ENCODE measurements at regions of chr11 and their contacts with region 1.

Region 1: GRCh38 chr11:123020968-123021367 is 39.3 kb upstream of the BSX start:
- DNase-seq: peak; percentile 20
- H3K4me3 ChIP-seq: no peak overlapping the region
- H3K27ac ChIP-seq: no peak overlapping the region
- H3K4me1 ChIP-seq: no peaks in the 10 kb centered on the region
- H3K27me3 ChIP-seq: no peaks in the 10 kb centered on the region
- CTCF ChIP-seq: peak; percentile 60 to 76

Region 2: DNA sequence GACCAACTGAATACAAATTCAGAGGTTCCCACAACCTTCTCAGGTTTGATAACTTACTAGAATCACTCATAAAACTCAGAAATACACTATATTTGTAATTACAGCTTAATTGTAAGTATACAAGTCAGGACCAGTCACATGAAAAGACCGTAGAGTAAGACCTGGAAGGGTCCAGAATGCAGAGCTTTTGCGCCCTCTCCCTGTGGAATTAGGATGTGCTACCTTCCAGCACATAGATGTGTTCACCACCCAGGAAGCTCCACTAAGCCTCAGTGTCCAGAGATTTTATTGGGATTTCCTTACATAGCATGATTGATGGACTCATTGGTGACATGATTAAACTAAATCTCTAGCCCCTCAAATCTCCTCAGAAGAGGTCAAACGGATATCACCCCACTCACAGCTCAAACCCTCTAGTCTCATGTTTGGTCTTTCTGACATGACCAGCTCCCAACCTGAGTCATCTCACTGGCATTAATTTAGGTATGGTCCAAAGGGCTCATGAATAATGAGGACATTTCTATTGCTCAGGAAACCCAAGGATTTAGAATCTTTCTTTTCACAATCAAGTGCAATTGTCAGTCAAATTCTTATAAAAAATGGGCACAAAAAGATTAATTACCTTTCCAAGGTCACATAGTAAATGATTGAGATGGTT is 442.7 kb before region 1 on chr11:
- CTCF ChIA-PET with region 1: interaction called, 12 read pairs
- dilution Hi-C with region 1: no loop called
- in situ Hi-C with region 1: loop called in 1 of 2 experiments (anchors 10 kb)
- intact Hi-C with region 1: loop called (anchors 1 kb)
- DNase-seq: no peak
- H3K4me3 ChIP-seq: no peak overlapping the region
- H3K27ac ChIP-seq: no peak overlapping the region
- H3K4me1 ChIP-seq: peaks cover 10% of the 10 kb centered on the region
- H3K27me3 ChIP-seq: no peaks in the 10 kb centered on the region
- CTCF ChIP-seq: no peak

Region 3: DNA sequence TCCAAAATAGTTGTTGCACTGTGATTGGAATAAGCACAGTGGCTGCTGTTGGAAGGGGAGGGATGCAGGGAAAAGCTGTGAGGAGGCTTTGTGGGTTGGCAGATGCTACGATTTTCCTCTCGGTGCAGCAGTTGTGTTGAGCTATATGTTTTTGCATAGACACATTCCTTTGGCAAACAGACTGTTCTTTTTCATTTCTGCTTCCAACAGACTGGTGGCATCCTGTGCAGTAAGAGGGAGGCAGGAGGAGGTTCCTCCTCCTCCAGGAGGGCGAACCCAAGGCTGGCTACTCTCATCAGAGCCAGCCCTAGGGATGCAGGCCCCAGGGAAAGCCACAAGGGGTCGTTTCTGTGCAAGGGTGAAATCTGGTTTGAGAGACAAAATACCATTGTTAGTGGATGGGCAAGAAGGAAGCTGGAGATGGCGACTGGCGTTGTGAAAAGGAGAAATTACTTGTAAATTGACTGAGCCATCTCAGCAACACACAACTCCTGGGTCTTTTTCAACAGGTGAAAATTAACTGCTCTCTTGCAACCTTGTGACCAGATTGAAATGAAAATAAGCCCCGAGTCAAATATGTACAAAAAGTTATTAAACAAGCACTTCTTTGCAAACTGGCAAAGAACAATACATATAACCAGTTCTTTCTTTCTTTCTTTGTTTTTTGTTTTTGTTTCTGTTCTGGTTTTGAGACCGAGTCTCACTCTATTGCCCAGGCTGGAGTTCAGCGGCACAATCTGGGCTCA is 392.0 kb before region 1 on chr11:
- CTCF ChIA-PET with region 1: no interaction called
- dilution Hi-C with region 1: no loop called
- in situ Hi-C with region 1: loop called in 1 of 2 experiments (anchors 25 kb)
- intact Hi-C with region 1: loop called (anchors 1 kb)
- DNase-seq: peak; percentile 65
- H3K4me3 ChIP-seq: no peak overlapping the region
- H3K27ac ChIP-seq: no peak overlapping the region
- H3K4me1 ChIP-seq: peaks cover 24% of the 10 kb centered on the region
- H3K27me3 ChIP-seq: no peaks in the 10 kb centered on the region
- CTCF ChIP-seq: peak; percentile 84 to 95

Region 4: DNA sequence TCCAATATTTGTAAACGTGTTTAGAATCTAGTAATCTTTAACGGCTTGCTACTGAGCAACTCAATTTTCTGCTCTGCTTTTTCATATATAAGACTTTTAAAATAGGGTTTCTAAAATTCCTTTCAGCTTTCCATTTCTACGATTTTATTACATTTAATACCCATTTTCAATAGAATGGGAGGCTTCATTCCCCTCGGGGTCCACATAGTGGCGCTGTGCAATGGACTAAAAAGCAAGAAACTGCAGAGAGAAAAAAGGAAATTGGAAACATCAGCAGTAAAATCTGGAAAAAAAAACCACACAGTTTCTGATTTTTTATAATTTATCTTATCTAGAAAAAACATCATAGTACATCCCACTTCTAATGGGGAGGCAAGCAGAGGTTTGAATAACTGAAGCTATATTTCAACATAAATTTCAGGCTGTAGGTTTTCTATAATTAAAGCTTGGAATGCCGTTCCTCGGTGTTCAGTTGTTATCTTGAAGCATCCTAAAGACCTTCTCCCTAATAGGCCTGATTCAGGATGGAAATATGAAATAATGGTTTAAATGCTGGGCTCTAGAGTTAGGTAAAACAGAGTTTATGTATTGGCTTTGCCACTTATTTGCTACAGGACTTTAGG is 157.2 kb before region 1 on chr11:
- CTCF ChIA-PET with region 1: interaction called, 5 read pairs
- dilution Hi-C with region 1: no loop called
- in situ Hi-C with region 1: loop called in 1 of 2 experiments (anchors 10 kb)
- intact Hi-C with region 1: loop called (anchors 1 kb)
- DNase-seq: no peak
- H3K4me3 ChIP-seq: no peak overlapping the region
- H3K27ac ChIP-seq: no peak overlapping the region
- H3K4me1 ChIP-seq: peaks cover 6% of the 10 kb centered on the region
- H3K27me3 ChIP-seq: no peaks in the 10 kb centered on the region
- CTCF ChIP-seq: peak; percentile 85 to 90

Region 5: GRCh38 chr11:122910775-122911174 is 110.2 kb before region 1 on chr11:
- CTCF ChIA-PET with region 1: no interaction called
- dilution Hi-C with region 1: no loop called
- in situ Hi-C with region 1: no loop called
- intact Hi-C with region 1: loop called (anchors 1 kb)
- DNase-seq: peak; percentile 8
- H3K4me3 ChIP-seq: no peak overlapping the region
- H3K27ac ChIP-seq: no peak overlapping the region
- H3K4me1 ChIP-seq: no peaks in the 10 kb centered on the region
- H3K27me3 ChIP-seq: no peaks in the 10 kb centered on the region
- CTCF ChIP-seq: peak; percentile 12 to 49

Region 6: DNA sequence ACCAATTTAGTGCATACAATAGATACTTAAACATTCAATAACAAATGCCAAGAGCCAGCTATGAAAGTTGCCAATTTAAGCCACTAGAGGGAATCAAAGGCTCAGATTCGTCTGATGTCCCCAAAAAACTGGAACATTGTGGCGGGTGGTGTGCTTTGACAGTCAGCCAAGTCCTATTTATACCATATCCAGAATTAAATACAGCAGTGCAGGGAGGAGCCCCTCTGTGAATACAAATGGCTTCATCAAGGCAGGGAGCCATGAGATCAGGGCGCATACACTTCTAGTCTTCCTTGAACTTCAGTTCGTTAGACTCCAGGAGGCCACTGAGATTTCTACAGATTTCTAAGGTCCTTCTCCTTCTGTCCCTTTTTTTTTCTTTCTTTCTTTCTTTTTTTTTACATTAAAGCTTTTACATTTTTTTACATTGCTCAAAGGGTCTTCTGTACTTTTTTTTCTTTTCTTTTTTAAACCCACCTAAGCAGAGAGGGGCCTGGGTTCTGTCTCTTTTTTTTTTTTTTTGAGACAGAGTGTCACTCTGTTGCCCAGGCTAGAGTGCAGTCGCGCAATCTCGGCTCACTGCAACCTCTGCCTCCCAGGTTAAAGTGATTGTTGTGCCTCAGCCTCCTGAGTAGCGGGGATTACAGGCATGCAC is 82.5 kb after region 1 on chr11:
- CTCF ChIA-PET with region 1: no interaction called
- dilution Hi-C with region 1: no loop called
- in situ Hi-C with region 1: no loop called
- intact Hi-C with region 1: no loop called
- DNase-seq: peak; percentile 27
- H3K4me3 ChIP-seq: no peak overlapping the region
- H3K27ac ChIP-seq: no peak overlapping the region
- H3K4me1 ChIP-seq: peaks cover 5% of the 10 kb centered on the region
- H3K27me3 ChIP-seq: no peaks in the 10 kb centered on the region
- CTCF ChIP-seq: peak; percentile 42 to 70

Measured in mammary epithelial cell (primary cell).